Heart right ventricle (tissue), 16 donors: ENCODE measurements at regions of chr2 and their contacts with region 1.

Region 1: GRCh38 chr2:202049840-202050239 is 16.2 kb downstream of the FZD7 start:
- DNase-seq: no peak
- ATAC-seq: peak in 1 of 8 donors; percentile 35
- H3K4me3 ChIP-seq: no peak overlapping the region
- H3K27ac ChIP-seq: no peak overlapping the region
- H3K4me1 ChIP-seq: peaks cover 0 to 20% (median 10%) of the 10 kb centered on the region in 9 donors
- H3K27me3 ChIP-seq: peaks cover 0 to 14% (median 0%) of the 10 kb centered on the region in 7 donors
- CTCF ChIP-seq: no peak

Region 2: GRCh38 chr2:201933792-201934237 is 116.0 kb before region 1 on chr2:
- intact Hi-C with region 1: no loop called
- DNase-seq: no peak
- ATAC-seq: peak in 3 of 8 donors; percentile 20 to 69 (median 27)
- H3K4me3 ChIP-seq: no peak overlapping the region
- H3K27ac ChIP-seq: no peak overlapping the region
- H3K4me1 ChIP-seq: peaks cover 0 to 7% (median 0%) of the 10 kb centered on the region in 9 donors
- H3K27me3 ChIP-seq: peaks cover 0 to 18% (median 5%) of the 10 kb centered on the region in 7 donors
- CTCF ChIP-seq: no peak

Region 3: DNA sequence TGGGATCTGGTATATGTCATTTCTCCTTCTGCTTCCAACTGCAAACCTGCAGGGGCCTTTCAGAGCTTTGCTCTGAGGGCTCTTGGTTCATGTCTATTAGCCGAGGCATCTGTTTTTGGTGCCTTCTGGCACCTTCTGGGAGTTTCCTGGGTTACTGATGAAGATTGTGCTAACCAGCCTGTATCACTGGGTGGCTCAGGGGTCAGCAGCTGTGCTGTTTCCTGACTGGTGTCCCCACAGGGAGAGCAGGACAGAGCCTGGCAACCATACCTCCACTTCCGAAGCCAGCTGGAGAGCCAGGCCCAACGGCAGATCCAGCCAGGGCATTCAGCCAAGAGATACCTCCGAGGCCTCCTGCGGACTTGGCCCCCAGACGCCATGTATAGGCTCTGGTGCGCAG is 40.7 kb after region 1 on chr2:
- intact Hi-C with region 1: loop called in 1 of 10 experiments (anchors 1 kb)
- DNase-seq: peak; percentile 6 to 19
- ATAC-seq: peak; percentile 33 to 86 (median 60)
- H3K4me3 ChIP-seq: no peak overlapping the region
- H3K27ac ChIP-seq: no peak overlapping the region
- H3K4me1 ChIP-seq: peaks cover 0 to 21% (median 8%) of the 10 kb centered on the region in 9 donors
- H3K27me3 ChIP-seq: no peaks in the 10 kb centered on the region
- CTCF ChIP-seq: no peak